GM12878 (cell line): ENCODE measurements at regions of chr7 and their contacts with region 1.

Region 1: GRCh38 chr7:139645572-139646523 is 122.4 kb downstream of the CLEC2L start:
- DNase-seq: peak; percentile 28
- ATAC-seq: peak; percentile 43
- H3K4me3 ChIP-seq: no peak overlapping the region
- H3K27ac ChIP-seq: no peak overlapping the region
- H3K4me1 ChIP-seq: peaks cover 39% of the 10 kb centered on the region
- H3K27me3 ChIP-seq: no peaks in the 10 kb centered on the region
- CTCF ChIP-seq: peak; percentile 81 to 92 (median 87)
- EP300 ChIP-seq: no peak
- POLR2A ChIP-seq: no peak
- RAD21 ChIP-seq: peak; percentile 98

Region 2: GRCh38 chr7:139660317-139661042 is 14.6 kb after region 1 on chr7:
- CTCF ChIA-PET with region 1: interaction called, 21 read pairs
- POLR2A ChIA-PET with region 1: interaction called, 5 read pairs
- RAD21 ChIA-PET with region 1: interaction called, 5 read pairs
- SMC1A ChIA-PET with region 1: interaction called, 19 read pairs
- in situ Hi-C with region 1: no loop called
- intact Hi-C with region 1: no loop called
- DNase-seq: no peak
- ATAC-seq: no peak
- H3K4me3 ChIP-seq: no peak overlapping the region
- H3K27ac ChIP-seq: no peak overlapping the region
- H3K4me1 ChIP-seq: no peaks in the 10 kb centered on the region
- H3K27me3 ChIP-seq: no peaks in the 10 kb centered on the region
- CTCF ChIP-seq: no peak
- EP300 ChIP-seq: no peak
- POLR2A ChIP-seq: no peak
- RAD21 ChIP-seq: no peak

Region 3: DNA sequence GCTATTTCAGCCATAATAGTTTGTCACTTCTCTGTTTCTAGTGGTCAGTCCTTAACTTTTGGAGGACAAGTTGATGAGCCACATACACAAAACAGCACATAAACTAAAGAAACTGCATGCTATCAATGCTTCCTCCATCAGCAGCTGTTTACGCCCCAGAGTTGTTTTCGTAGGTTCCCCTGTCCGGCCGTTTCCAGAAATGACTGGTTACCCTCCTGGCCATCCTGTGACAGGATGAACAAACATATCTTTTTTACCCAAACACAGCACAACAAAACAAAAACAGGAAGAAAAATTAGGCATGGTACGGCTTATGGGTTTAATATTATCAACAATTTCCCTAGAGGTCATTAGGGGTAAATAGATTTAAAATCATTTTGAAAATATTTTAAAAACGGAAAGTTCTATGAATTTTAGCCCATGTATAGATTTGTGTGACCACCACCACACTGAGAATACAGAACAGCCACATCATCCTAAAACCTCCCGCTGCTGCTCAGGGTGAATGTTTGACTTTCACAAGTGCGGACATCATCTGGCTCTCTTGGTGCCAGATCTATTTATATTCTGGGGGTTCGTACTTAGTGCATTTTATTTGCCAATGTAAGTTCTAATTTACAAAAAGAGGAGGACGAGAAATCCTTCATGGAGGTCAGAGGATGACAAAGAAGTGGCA is 57.1 kb after region 1 on chr7:
- CTCF ChIA-PET with region 1: interaction called, 3 read pairs
- POLR2A ChIA-PET with region 1: interaction called, 4 read pairs
- RAD21 ChIA-PET with region 1: interaction called, 11 read pairs
- SMC1A ChIA-PET with region 1: interaction called, 28 read pairs
- in situ Hi-C with region 1: no loop called
- intact Hi-C with region 1: loop called (anchors 2 kb)
- DNase-seq: no peak
- ATAC-seq: peak; percentile 87
- H3K4me3 ChIP-seq: no peak overlapping the region; the same call in 1 of the 2 replicates
- H3K27ac ChIP-seq: peak overlapping the region; percentile 91
- H3K4me1 ChIP-seq: peaks cover 48% of the 10 kb centered on the region
- H3K27me3 ChIP-seq: no peaks in the 10 kb centered on the region
- CTCF ChIP-seq: no peak
- EP300 ChIP-seq: peak; percentile 46 to 86; a peak in 3 of 4 replicates
- POLR2A ChIP-seq: no peak
- RAD21 ChIP-seq: 0 out of 2 replicates have a peak, but pooled peaks have one; percentile 7

Region 4: GRCh38 chr7:139767561-139767982 is 121.7 kb after region 1 on chr7:
- CTCF ChIA-PET with region 1: interaction called, 6 read pairs
- POLR2A ChIA-PET with region 1: interaction called, 4 read pairs
- RAD21 ChIA-PET with region 1: interaction called, 19 read pairs
- SMC1A ChIA-PET with region 1: interaction called, 74 read pairs
- in situ Hi-C with region 1: loop called (anchors 5 kb)
- intact Hi-C with region 1: no loop called
- DNase-seq: peak; percentile 48
- ATAC-seq: peak; percentile 79
- H3K4me3 ChIP-seq: no peak overlapping the region
- H3K27ac ChIP-seq: peak overlapping the region; percentile 35; the same call in 1 of the 2 replicates
- H3K4me1 ChIP-seq: peaks cover 31% of the 10 kb centered on the region
- H3K27me3 ChIP-seq: no peaks in the 10 kb centered on the region
- CTCF ChIP-seq: no peak
- EP300 ChIP-seq: no peak
- POLR2A ChIP-seq: no peak
- RAD21 ChIP-seq: no peak

Region 5: GRCh38 chr7:139829025-139829774 is 183.4 kb after region 1 on chr7 and contains the start of gene TBXAS1:
- CTCF ChIA-PET with region 1: interaction called, 52 read pairs
- POLR2A ChIA-PET with region 1: no interaction called
- RAD21 ChIA-PET with region 1: interaction called, 22 read pairs
- SMC1A ChIA-PET with region 1: interaction called, 38 read pairs
- in situ Hi-C with region 1: no loop called
- intact Hi-C with region 1: loop called (anchors 2 kb)
- DNase-seq: no peak
- ATAC-seq: peak; percentile 74
- H3K4me3 ChIP-seq: peak within 1 kb of the TSS; percentile 54
- H3K27ac ChIP-seq: peak within 1 kb of the TSS; percentile 81
- H3K4me1 ChIP-seq: peaks cover 26% of the 10 kb centered on the region
- H3K27me3 ChIP-seq: peaks cover 0 to 1% of the 10 kb centered on the region in 2 experiments; a peak in 1 of 4 replicates
- CTCF ChIP-seq: no peak
- EP300 ChIP-seq: no peak
- POLR2A ChIP-seq: peak; percentile 63; the same call in 1 of the 2 replicates
- RAD21 ChIP-seq: no peak
- polyA plus RNA-seq, gene TBXAS1: 6.8 to 8.3 TPM

Region 6: GRCh38 chr7:139995017-139995931 is 349.4 kb after region 1 on chr7:
- CTCF ChIA-PET with region 1: interaction called, 225 read pairs
- POLR2A ChIA-PET with region 1: no interaction called
- RAD21 ChIA-PET with region 1: interaction called, 135 read pairs
- SMC1A ChIA-PET with region 1: interaction called, 121 read pairs
- in situ Hi-C with region 1: loop called (anchors 5 kb)
- intact Hi-C with region 1: no loop called
- DNase-seq: no peak
- ATAC-seq: no peak
- H3K4me3 ChIP-seq: no peak overlapping the region
- H3K27ac ChIP-seq: no peak overlapping the region
- H3K4me1 ChIP-seq: no peaks in the 10 kb centered on the region
- H3K27me3 ChIP-seq: no peaks in the 10 kb centered on the region; a peak in 1 of 4 replicates
- CTCF ChIP-seq: no peak
- EP300 ChIP-seq: no peak
- POLR2A ChIP-seq: no peak
- RAD21 ChIP-seq: no peak